ENCODE measurements at regions of chr3 and their contacts with region 1.

Region 1: GRCh38 chr3:150603153-150603979 is at the start of gene SELENOT:
- DNase-seq: peak; percentile 93 to 96
- H3K4me3 ChIP-seq: peak within 1 kb of the TSS; percentile 71
- H3K4me1 ChIP-seq: peaks cover 53% of the 10 kb centered on the region
- H3K27me3 ChIP-seq: no peaks in the 10 kb centered on the region

Region 2: GRCh38 chr3:149941186-149941585 is 662.2 kb before region 1 on chr3:
- in situ Hi-C with region 1: no loop called
- DNase-seq: no peak
- H3K4me3 ChIP-seq: no peak overlapping the region
- H3K4me1 ChIP-seq: no peaks in the 10 kb centered on the region
- H3K27me3 ChIP-seq: no peaks in the 10 kb centered on the region

Region 3: DNA sequence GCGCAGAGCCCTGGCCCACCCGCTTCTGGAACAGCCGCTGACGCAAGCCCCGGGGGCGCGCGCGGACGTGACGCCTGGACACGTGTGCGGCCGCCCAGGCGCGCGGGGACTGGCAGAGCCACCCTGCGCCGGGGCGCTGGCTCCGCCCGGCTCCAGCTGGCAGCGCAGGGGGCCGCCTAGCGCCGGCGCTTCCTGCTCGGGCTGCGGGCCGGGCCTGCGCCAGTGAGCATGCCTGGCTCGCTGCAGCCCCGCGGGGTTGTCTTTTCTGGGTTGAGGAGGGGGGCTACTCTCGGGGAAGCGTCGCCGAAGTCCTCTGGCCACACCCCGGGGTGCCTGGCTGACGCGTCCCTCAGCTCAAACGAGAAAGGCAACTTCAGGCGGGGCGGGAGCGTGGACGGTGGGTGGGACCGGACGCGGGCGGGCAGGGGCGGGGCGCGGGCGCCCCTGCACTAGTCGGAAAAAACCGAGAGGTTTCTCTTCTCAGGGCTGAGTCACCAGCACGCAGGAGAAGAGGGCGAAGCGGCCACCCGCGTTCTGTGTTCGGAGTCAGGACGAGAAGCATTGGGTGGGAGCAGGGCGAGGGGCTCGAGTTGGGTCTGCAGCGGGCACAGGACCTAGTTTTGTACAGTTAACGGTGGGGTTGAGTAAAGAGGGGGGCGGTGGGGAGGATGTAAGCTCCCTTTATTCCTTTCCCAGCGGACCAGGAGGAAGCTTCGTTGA is 159.9 kb after region 1 on chr3 and contains the start of gene SIAH2:
- in situ Hi-C with region 1: loop called (anchors 10 kb)
- DNase-seq: peak; percentile 78 to 88
- H3K4me3 ChIP-seq: peak within 1 kb of the TSS; percentile 62
- H3K4me1 ChIP-seq: peaks cover 20% of the 10 kb centered on the region
- H3K27me3 ChIP-seq: no peaks in the 10 kb centered on the region

Region 4: DNA sequence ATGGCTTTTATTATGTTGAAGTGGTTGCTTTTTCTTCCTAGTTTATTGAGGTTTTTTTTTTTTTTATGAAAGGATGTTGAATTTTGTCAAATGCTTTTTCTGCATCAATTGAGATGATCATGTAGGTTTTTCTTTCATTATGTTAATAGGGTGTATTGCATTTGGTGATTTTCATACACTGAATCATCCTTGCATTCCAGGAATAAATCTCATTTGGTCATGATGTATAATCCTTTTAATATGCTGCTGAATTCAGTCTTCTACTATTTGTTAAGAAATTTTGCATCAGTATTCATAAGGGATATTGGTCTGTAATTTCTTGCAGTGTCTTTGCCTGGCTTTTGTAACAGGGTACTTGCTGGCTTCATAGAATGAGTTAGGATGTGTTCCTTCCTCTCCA is 380.7 kb after region 1 on chr3:
- in situ Hi-C with region 1: no loop called
- DNase-seq: no peak
- H3K4me3 ChIP-seq: no peak overlapping the region
- H3K4me1 ChIP-seq: no peaks in the 10 kb centered on the region
- H3K27me3 ChIP-seq: peaks cover 4% of the 10 kb centered on the region; the same call in 1 of the 2 replicates